Heart right ventricle (tissue), 16 donors: ENCODE measurements at regions of chr1 and their contacts with region 1.

Region 1: DNA sequence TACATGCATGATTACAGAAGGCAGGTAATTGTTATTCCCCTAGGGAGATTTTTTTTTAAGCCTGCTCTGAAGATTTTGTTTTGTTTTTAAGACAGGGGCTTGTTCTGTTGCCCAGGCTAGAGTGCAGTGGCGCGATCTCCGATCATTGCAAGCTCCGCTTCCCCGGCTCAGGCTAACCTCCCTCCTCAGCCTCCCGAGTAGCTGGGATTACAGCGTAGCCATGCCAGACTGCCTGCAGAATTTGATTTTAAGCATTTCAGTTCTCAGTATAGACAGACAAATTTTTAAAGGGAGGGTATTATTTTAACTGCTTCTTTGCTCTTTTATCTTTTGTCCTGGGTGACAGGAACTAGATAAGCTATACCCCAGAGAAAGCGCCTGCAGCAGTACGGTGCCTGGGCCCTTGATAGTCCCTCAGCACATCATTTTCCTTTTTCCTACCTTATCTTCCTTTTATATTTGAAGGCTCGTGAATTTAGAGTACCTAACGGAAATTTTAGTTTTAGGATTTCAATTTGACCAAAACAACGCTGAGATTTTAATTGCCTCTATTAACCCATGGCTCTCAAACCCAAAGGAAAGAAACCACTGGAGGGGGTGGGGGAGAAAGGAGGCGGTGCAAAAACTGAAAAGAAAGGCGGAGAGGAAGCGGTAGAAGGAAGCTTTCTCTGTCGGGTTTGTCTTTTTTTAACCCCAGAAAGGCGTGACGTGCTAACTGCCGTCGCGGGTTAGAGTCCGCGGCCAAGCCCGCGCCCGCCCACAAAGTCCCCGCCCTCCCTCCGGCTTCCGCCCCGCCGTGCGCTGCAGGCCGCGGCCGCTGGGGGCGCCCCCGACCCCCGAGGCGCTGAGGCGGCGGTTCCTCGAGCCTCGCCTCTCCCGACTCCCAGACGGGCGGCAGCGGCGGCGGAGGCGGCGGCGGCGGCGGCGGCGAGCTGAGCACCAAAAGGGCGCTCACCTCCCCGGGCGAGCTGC is at the start of gene EEIG2:
- DNase-seq: peak; percentile 87 to 91
- ATAC-seq: peak; percentile 87 to 97 (median 94)
- H3K4me3 ChIP-seq: peak within 1 kb of the TSS; percentile 64 to 83 (median 76)
- H3K27ac ChIP-seq: peak within 1 kb of the TSS; percentile 18 to 88 (median 66)
- H3K4me1 ChIP-seq: peaks cover 0 to 64% (median 21%) of the 10 kb centered on the region in 9 donors
- H3K27me3 ChIP-seq: no peaks in the 10 kb centered on the region
- CTCF ChIP-seq: peak; percentile 67 to 95 (median 80)
- total RNA-seq, gene EEIG2: 3.5 to 10.0 (median 6.1) TPM

Region 2: GRCh38 chr1:108512239-108512981 is 47.1 kb before region 1 on chr1:
- intact Hi-C with region 1: loop called in 8 of 10 experiments (anchors 2 to 10 kb)
- DNase-seq: no peak
- ATAC-seq: peak in 3 of 8 donors; percentile 61 to 73 (median 72)
- H3K4me3 ChIP-seq: no peak overlapping the region
- H3K27ac ChIP-seq: no peak overlapping the region
- H3K4me1 ChIP-seq: no peaks in the 10 kb centered on the region
- H3K27me3 ChIP-seq: no peaks in the 10 kb centered on the region
- CTCF ChIP-seq: peak; percentile 73 to 95 (median 91)

Region 3: GRCh38 chr1:108595507-108595906 is 36.0 kb after region 1 on chr1:
- intact Hi-C with region 1: loop called in 4 of 10 experiments (anchors 2 to 5 kb)
- DNase-seq: no peak
- ATAC-seq: peak in 6 of 8 donors; percentile 28 to 65 (median 49)
- H3K4me3 ChIP-seq: no peak overlapping the region
- H3K27ac ChIP-seq: peak overlapping the region in 6 of 10 donors; percentile 11 to 53 (median 44)
- H3K4me1 ChIP-seq: peaks cover 7 to 71% (median 40%) of the 10 kb centered on the region in 9 donors
- H3K27me3 ChIP-seq: no peaks in the 10 kb centered on the region
- CTCF ChIP-seq: no peak

Region 4: DNA sequence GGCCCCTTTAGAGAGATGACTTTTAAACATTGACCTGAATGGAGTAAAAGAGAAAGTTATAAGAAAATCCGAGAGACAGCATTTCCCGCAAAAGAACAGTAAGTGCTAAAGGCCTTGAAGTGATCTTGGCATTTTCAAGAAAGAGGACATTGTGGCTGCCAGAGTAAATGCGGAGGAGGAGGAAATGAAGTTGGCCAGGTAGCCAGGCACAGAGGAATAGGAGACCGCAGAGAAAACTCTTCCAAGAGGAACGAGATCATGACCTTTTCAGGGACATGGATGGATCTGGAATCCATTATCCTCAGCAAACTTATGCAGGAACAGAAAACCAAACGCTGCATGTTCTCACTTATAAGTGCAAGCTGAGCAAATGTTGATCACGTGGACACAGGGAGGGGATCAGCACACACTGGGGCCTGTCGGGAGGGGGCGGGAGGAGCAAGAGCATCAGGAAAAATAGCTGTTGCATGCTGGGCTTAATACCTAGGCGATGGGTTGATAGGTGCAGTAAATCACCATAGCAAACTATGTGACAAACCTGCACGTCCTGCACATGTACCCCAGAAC is 50.1 kb after region 1 on chr1:
- intact Hi-C with region 1: loop called in 1 of 10 experiments (anchors 5 kb)
- DNase-seq: peak in 1 of 2 donors; percentile 32
- ATAC-seq: peak; percentile 35 to 84 (median 76)
- H3K4me3 ChIP-seq: peak overlapping the region in 2 of 10 donors; percentile 10 to 17
- H3K27ac ChIP-seq: peak overlapping the region in 9 of 10 donors; percentile 5 to 72 (median 54)
- H3K4me1 ChIP-seq: peaks cover 0 to 36% (median 25%) of the 10 kb centered on the region in 9 donors
- H3K27me3 ChIP-seq: no peaks in the 10 kb centered on the region
- CTCF ChIP-seq: no peak

Region 5: DNA sequence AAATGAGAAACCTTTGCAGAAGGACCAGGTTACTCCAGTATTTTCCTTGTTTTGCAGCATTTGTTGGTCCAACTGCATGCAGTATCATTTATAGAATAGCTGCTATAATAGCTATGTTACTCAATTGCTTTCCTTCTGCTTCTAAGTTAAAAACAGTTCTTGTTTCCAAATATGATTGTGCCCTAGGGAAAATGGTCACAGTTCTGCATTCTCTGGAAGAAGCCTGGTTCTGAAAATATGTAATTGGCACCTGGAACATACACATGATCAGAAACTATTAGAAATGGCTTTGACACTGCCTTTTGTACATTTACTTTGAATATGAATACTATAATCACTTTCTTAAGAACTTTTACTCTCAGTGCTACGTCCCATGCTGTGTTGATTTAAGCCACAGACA is 67.8 kb after region 1 on chr1:
- intact Hi-C with region 1: loop called in 1 of 10 experiments (anchors 5 kb)
- DNase-seq: no peak
- ATAC-seq: no peak
- H3K4me3 ChIP-seq: no peak overlapping the region
- H3K27ac ChIP-seq: no peak overlapping the region
- H3K4me1 ChIP-seq: peaks cover 0 to 4% (median 0%) of the 10 kb centered on the region in 9 donors
- H3K27me3 ChIP-seq: no peaks in the 10 kb centered on the region
- CTCF ChIP-seq: no peak

Region 6: DNA sequence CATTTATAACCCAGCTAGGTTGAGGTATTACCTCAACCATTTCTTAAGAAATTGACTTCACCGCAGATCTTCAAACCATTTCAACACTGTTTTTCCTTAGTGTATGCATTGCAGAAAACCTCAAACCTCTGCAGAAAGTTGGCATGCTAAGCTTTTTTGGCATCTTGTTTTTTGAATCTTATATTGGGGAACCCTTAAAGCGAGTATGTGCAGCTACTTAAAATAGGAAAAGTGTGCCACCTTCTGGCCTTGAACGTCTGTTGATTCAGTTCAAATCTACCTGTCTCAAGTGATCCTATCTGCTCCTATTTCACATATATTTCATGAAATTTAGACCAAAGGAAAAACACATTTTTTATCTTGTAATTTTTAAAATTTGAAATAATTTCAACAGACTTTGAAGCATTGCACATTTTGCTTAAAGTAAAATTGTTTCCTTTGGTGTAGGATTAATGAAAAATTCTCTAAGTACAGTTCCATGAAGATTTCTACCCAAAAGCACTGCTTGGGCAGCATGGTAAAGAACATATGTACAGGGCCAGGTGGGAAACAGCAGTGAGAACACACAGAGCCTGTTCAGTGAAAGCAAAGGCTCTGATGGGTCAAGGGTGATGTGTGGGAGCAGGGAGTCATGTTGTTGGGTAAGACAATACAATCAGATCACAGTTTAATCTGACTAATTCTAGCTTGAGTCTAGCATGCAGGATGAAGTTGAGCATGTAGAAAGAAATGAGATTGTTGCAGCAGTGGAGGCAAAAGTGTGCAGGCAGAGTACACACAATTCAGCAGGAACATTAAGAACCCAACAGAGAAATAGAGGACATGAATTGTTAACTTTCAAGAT is 84.2 kb after region 1 on chr1:
- intact Hi-C with region 1: loop called in 6 of 10 experiments (anchors 5 kb)
- DNase-seq: peak in 1 of 2 donors; percentile 56
- ATAC-seq: peak in 7 of 8 donors; percentile 50 to 80 (median 68)
- H3K4me3 ChIP-seq: no peak overlapping the region
- H3K27ac ChIP-seq: peak overlapping the region in 1 of 10 donors; percentile 90
- H3K4me1 ChIP-seq: peaks cover 0 to 41% (median 0%) of the 10 kb centered on the region in 9 donors
- H3K27me3 ChIP-seq: no peaks in the 10 kb centered on the region
- CTCF ChIP-seq: peak; percentile 30 to 83 (median 70)

Region 7: GRCh38 chr1:108691942-108692723 is 132.6 kb after region 1 on chr1 and contains the start of gene PRPF38B:
- intact Hi-C with region 1: loop called in 1 of 10 experiments (anchors 1 kb)
- DNase-seq: peak; percentile 95
- ATAC-seq: peak; percentile 98 to 99 (median 99)
- H3K4me3 ChIP-seq: peak within 1 kb of the TSS; percentile 60 to 87 (median 82)
- H3K27ac ChIP-seq: peak within 1 kb of the TSS; percentile 91 to 99 (median 96)
- H3K4me1 ChIP-seq: peaks cover 0 to 48% (median 33%) of the 10 kb centered on the region in 9 donors
- H3K27me3 ChIP-seq: no peaks in the 10 kb centered on the region
- CTCF ChIP-seq: no peak
- total RNA-seq, gene PRPF38B: 11.2 to 22.8 (median 13.3) TPM